HepG2 (cell line): ENCODE measurements at regions of chr3 and their contacts with region 1.

Region 1: GRCh38 chr3:168511428-168512014 is 415.8 kb upstream of the GOLIM4 start:
- DNase-seq: no peak
- ATAC-seq: no peak
- H3K4me3 ChIP-seq: no peak overlapping the region
- H3K27ac ChIP-seq: no peak overlapping the region
- H3K4me1 ChIP-seq: no peaks in the 10 kb centered on the region
- H3K27me3 ChIP-seq: no peaks in the 10 kb centered on the region
- CTCF ChIP-seq: peak; percentile 41
- EP300 ChIP-seq: no peak
- POLR2A ChIP-seq: no peak
- RAD21 ChIP-seq: no peak

Region 2: GRCh38 chr3:168168743-168169142 is 342.8 kb before region 1 on chr3:
- CTCF ChIA-PET with region 1: no interaction called
- POLR2A ChIA-PET with region 1: no interaction called
- in situ Hi-C with region 1: no loop called
- intact Hi-C with region 1: no loop called
- DNase-seq: no peak
- ATAC-seq: no peak
- H3K4me3 ChIP-seq: no peak overlapping the region
- H3K27ac ChIP-seq: no peak overlapping the region
- H3K4me1 ChIP-seq: peaks cover 6% of the 10 kb centered on the region; the same call in 1 of the 2 replicates
- H3K27me3 ChIP-seq: no peaks in the 10 kb centered on the region
- CTCF ChIP-seq: no peak
- EP300 ChIP-seq: no peak
- POLR2A ChIP-seq: no peak
- RAD21 ChIP-seq: no peak

Region 3: DNA sequence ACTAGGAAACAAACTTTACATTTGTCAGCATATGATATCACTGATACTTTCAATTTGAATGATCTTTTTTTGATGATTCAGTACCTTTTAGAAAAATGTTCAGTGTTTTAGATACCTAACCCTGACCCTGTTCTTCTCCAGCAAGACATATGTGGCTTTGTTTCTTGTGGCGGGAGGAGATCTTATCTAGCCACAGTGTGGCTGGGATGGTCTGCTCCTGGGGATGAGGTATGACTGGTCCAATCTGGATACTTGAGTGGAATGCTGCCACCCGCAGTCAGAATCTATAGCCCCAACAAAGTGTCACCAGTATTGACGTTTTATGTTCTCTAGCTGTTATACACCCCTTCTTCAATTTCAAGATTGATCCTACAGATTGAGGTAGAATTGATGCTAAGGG is 23.2 kb after region 1 on chr3:
- CTCF ChIA-PET with region 1: no interaction called
- POLR2A ChIA-PET with region 1: no interaction called
- in situ Hi-C with region 1: no loop called
- intact Hi-C with region 1: loop called (anchors 1 kb)
- DNase-seq: no peak
- ATAC-seq: no peak
- H3K4me3 ChIP-seq: no peak overlapping the region
- H3K27ac ChIP-seq: no peak overlapping the region
- H3K4me1 ChIP-seq: no peaks in the 10 kb centered on the region
- H3K27me3 ChIP-seq: no peaks in the 10 kb centered on the region
- CTCF ChIP-seq: no peak
- EP300 ChIP-seq: no peak
- POLR2A ChIP-seq: no peak
- RAD21 ChIP-seq: no peak

Region 4: GRCh38 chr3:168615493-168616020 is 104.0 kb after region 1 on chr3:
- CTCF ChIA-PET with region 1: interaction called, 32 read pairs
- POLR2A ChIA-PET with region 1: no interaction called
- in situ Hi-C with region 1: loop called (anchors 5 kb)
- intact Hi-C with region 1: no loop called
- DNase-seq: no peak
- ATAC-seq: no peak
- H3K4me3 ChIP-seq: no peak overlapping the region
- H3K27ac ChIP-seq: no peak overlapping the region
- H3K4me1 ChIP-seq: no peaks in the 10 kb centered on the region
- H3K27me3 ChIP-seq: no peaks in the 10 kb centered on the region
- CTCF ChIP-seq: no peak
- EP300 ChIP-seq: no peak
- POLR2A ChIP-seq: no peak
- RAD21 ChIP-seq: no peak

Region 5: DNA sequence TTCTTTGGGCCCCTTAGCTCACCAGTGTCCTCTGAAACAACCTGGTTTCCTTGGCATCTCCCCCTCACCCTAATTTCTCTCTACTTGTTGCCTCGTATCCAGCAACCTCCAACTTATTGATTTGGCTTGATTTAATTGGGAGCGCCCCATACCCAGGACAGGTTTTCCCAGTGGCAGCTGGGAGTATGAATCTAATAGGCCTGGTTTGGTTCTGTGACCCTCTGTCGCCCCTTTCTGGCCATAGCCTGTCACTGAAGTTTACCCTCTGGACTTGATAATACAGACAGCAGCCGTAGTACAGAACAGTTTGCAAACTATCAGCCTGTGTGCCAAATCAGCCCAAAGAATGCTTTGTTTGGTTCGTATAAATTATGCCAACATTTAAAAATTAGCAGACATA is 109.3 kb after region 1 on chr3:
- CTCF ChIA-PET with region 1: interaction called, 32 read pairs
- POLR2A ChIA-PET with region 1: no interaction called
- in situ Hi-C with region 1: loop called (anchors 5 kb)
- intact Hi-C with region 1: loop called (anchors 1 kb)
- DNase-seq: peak; percentile 41
- ATAC-seq: peak; percentile 100
- H3K4me3 ChIP-seq: no peak overlapping the region
- H3K27ac ChIP-seq: no peak overlapping the region
- H3K4me1 ChIP-seq: no peaks in the 10 kb centered on the region
- H3K27me3 ChIP-seq: no peaks in the 10 kb centered on the region
- CTCF ChIP-seq: peak; percentile 80
- EP300 ChIP-seq: no peak
- POLR2A ChIP-seq: no peak
- RAD21 ChIP-seq: peak; percentile 67

Region 6: GRCh38 chr3:168847291-168847883 is 335.9 kb after region 1 on chr3:
- CTCF ChIA-PET with region 1: interaction called, 17 read pairs
- POLR2A ChIA-PET with region 1: no interaction called
- in situ Hi-C with region 1: loop called (anchors 5 kb)
- intact Hi-C with region 1: loop called (anchors 1 kb)
- DNase-seq: no peak
- ATAC-seq: peak; percentile 65
- H3K4me3 ChIP-seq: no peak overlapping the region; a peak in 1 of 6 replicates
- H3K27ac ChIP-seq: no peak overlapping the region
- H3K4me1 ChIP-seq: peaks cover 9% of the 10 kb centered on the region
- H3K27me3 ChIP-seq: peaks cover 0 to 4% of the 10 kb centered on the region in 2 experiments; a peak in 1 of 5 replicates
- CTCF ChIP-seq: peak; percentile 64
- EP300 ChIP-seq: no peak
- POLR2A ChIP-seq: no peak
- RAD21 ChIP-seq: 0 out of 2 replicates have a peak, but pooled peaks have one; percentile 32